ENCODE measurements at regions of chr4 and their contacts with region 1.

Region 1: DNA sequence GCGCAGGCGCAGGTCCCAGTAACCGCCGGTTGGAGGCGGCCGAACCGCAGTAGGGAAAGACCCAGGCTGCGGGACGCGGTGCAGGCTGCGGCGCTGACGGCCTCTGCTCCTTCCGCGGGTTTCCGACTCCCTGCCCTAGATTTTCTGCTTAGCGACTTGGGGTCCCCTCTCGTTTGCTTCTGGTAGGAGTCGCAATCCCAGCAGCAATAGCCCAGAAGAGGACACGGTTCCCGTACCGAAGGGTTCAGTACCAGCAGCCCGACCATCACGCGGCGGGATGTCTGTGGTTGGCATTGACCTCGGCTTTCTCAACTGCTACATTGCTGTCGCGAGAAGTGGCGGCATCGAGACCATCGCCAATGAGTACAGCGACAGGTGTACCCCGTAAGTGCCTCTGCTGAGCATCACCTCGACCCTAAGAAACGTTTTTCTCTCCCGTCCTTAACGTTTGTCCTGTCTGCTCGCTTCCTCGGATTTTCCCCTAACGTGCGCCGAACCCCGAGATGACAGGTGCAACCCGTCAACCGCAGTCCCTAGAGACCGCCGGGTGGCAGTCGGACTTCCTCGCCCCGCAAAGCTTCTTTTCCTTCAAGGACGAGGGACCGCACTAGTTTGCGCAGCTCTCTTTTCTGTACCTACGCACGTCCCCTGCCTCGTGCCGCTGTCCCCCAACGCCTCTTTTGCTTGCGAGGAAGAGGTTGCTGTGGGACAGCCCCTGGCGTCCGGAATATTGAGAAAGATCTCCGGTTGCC is at the start of gene HSPA4L:
- DNase-seq: peak; percentile 27 to 94 (median 54)

Region 2: DNA sequence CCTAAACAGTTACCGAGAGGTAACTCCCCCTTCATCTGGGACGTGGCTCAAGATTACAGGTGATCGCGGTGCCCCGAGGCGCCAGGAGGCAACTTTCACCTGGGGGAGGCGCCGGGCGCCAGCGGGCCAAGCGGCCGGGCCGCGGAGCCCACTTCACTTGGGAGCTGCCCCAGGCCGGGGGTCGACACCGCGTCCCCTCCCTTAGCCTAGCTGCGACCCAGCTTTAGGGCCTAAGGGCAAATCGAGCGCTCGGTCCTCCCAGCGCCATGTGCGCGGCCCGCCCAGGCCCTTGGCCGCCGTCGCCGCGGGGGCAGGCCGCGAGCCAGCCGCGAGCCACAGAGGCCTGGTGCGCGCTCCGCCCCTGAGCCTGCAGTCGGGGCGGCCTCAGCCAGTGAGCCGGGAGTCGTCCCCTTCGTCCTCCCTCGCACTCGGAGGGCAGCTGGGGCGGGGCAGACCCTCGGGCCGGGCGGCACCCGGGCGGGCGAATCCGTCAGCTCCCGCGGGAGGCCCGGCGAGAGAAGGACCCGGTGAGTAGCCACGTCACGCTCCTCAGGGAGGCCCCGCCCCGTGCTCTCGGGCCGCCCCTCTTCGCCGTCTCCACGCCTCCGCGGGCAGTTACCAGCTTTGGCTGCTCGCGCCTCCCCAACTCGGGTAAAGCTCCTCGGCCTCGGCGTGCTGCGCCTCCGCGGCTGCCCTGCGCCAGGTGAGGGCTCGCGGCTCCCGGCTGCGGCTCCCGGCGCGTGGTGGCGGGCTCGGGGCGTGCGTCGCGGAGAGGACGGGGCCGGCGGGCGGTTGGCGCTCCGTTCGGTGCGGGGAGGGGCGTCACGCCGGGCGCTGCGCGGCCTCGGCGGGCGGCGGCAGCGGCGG is 278.5 kb after region 1 on chr4 and contains the start of gene LARP1B:
- intact Hi-C with region 1: loop called (anchors 2 kb)
- DNase-seq: peak; percentile 81 to 98 (median 94)

Measured in head of caudate nucleus (tissue), 42 donors.